ENCODE measurements at regions of chr2 and their contacts with region 1.

Region 1: GRCh38 chr2:68190991-68191731 is 33.5 kb downstream of the PNO1 start:
- DNase-seq: no peak
- H3K4me3 Mint-ChIP-seq: no peak overlapping the region
- H3K27ac Mint-ChIP-seq: peak overlapping the region; percentile 58
- H3K4me1 Mint-ChIP-seq: peaks cover 20% of the 10 kb centered on the region
- H3K27me3 Mint-ChIP-seq: no peaks in the 10 kb centered on the region
- CTCF ChIP-seq: no peak

Region 2: GRCh38 chr2:68238955-68239822 is 48.0 kb after region 1 on chr2:
- CTCF ChIA-PET with region 1: interaction called, 3 read pairs
- intact Hi-C with region 1: loop called (anchors 5 kb)
- DNase-seq: no peak
- H3K4me3 Mint-ChIP-seq: no peak overlapping the region
- H3K27ac Mint-ChIP-seq: no peak overlapping the region
- H3K4me1 Mint-ChIP-seq: peaks cover 37% of the 10 kb centered on the region
- H3K27me3 Mint-ChIP-seq: no peaks in the 10 kb centered on the region
- CTCF ChIP-seq: no peak

Measured in Calu3 (cell line).